SK-N-SH (cell line): ENCODE measurements at regions of chr7 and their contacts with region 1.

Region 1: DNA sequence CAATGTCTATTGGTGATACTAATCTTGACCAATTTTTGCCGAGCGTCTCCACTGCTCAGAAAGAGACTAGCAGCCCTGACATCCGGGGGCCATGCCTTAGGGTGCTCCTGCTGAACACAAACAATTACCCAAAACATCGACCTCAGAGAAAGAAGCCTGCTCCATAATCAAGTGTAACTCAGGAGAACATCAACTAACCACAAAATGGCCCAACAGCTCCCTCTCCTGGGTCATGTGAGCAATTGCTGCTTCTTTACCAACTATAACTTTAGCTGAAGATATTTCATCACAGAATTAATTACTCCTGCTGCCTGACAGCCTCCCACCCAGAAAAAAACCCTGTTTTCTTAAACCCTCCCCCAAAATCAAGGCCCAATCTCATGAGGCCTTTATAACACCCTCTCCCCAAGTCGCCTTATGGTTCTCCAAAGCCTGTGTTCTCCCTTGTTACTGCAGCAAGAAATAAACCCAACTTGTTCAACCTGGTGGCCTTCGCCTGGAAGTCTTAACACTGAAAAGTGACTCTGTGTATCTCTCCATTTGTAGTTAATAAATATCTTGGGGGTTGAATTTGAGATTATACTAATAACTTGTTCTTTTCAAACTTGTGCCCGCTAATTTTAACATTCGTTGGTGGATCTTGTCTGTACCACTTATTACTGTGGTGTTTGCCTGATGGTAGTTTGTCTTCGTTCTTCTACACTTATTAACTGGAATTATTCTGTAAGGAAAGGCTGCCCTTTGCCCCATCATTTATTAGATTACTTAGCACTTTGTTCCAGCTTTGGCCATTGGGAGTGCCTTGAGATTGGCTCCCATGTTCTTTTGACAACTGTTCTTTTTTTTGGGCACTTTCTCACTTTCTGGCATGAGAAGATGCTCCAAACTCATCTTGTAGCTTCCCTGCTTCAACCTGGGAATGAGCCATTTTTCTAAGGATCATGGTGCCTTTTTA is 21.2 kb upstream of the RAMP3 start:
- DNase-seq: peak; percentile 86
- H3K4me3 ChIP-seq: no peak overlapping the region; a peak in 1 of 4 replicates
- H3K27ac ChIP-seq: no peak overlapping the region
- H3K4me1 ChIP-seq: no peaks in the 10 kb centered on the region
- H3K27me3 ChIP-seq: peaks cover 9% of the 10 kb centered on the region; the same call in 1 of the 2 replicates
- CTCF ChIP-seq: peak; percentile 99
- EP300 ChIP-seq: no peak
- RAD21 ChIP-seq: peak; percentile 100

Region 2: GRCh38 chr7:44858161-44858560 is 278.2 kb before region 1 on chr7:
- CTCF ChIA-PET with region 1: interaction called, 60 read pairs
- POLR2A ChIA-PET with region 1: interaction called, 6 read pairs
- DNase-seq: no peak
- H3K4me3 ChIP-seq: no peak overlapping the region
- H3K27ac ChIP-seq: no peak overlapping the region
- H3K4me1 ChIP-seq: no peaks in the 10 kb centered on the region
- H3K27me3 ChIP-seq: no peaks in the 10 kb centered on the region
- CTCF ChIP-seq: peak; percentile 53
- EP300 ChIP-seq: no peak
- RAD21 ChIP-seq: no peak

Region 3: GRCh38 chr7:44921607-44922359 is 214.6 kb before region 1 on chr7:
- CTCF ChIA-PET with region 1: interaction called, 19 read pairs
- POLR2A ChIA-PET with region 1: no interaction called
- DNase-seq: peak; percentile 90
- H3K4me3 ChIP-seq: no peak overlapping the region; a peak in 1 of 4 replicates
- H3K27ac ChIP-seq: no peak overlapping the region
- H3K4me1 ChIP-seq: no peaks in the 10 kb centered on the region
- H3K27me3 ChIP-seq: 0 out of 2 replicates have a peak, but pooled peaks cover 3% of the 10 kb centered on the region
- CTCF ChIP-seq: peak; percentile 95
- EP300 ChIP-seq: no peak
- RAD21 ChIP-seq: peak; percentile 87

Region 4: GRCh38 chr7:44964384-44964825 is 172.0 kb before region 1 on chr7:
- CTCF ChIA-PET with region 1: interaction called, 125 read pairs
- POLR2A ChIA-PET with region 1: no interaction called
- DNase-seq: peak; percentile 71
- H3K4me3 ChIP-seq: no peak overlapping the region
- H3K27ac ChIP-seq: no peak overlapping the region
- H3K4me1 ChIP-seq: no peaks in the 10 kb centered on the region
- H3K27me3 ChIP-seq: no peaks in the 10 kb centered on the region
- CTCF ChIP-seq: peak; percentile 57
- EP300 ChIP-seq: no peak
- RAD21 ChIP-seq: peak; percentile 58

Region 5: DNA sequence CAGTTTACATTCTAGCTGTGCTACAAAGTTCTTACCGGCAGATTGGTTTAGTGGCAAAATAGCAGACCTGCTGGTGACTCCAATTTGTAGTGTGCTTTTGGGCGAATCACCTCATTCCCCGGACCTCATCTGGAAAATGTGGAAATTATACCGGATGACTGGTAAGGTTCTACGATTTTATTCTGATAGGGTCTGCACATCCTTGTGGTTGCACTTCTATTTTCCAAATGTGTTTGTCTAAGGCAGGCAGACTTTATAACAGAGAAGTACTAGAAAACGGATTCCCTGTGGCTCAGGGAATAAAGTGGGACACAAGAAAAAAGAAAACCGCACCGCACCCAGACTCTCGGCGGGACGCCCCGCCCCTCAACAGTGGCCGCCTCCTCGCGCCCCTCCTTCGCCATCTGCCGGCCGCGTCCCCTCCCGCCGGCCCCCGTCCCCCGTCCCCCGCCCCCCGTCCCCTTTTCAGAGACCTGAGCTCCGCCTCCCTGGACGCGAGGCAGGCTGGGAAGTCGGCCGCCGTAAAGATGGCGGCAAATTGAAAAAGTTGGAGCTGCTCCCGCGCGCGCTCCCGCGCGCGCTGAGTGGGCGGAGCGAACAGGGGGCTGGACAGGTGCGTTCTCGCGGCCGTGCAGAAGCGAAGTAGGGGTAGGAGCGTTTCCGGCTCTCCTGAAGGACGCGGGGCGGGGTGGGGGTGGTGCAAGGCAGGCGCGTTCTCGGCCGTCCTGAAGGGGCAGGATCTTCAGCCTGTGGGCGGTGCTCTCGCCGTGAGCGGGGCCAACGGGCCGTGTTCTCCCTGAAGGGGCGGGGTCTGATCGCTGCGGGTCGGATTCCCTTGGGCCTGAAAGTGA is 136.9 kb before region 1 on chr7:
- CTCF ChIA-PET with region 1: interaction called, 12 read pairs
- POLR2A ChIA-PET with region 1: no interaction called
- DNase-seq: peak; percentile 99
- H3K4me3 ChIP-seq: peak overlapping the region; percentile 48 to 77
- H3K27ac ChIP-seq: peak overlapping the region; percentile 80 to 86
- H3K4me1 ChIP-seq: peaks cover 0 to 10% of the 10 kb centered on the region in 2 experiments; a peak in 3 of 4 replicates
- H3K27me3 ChIP-seq: no peaks in the 10 kb centered on the region
- CTCF ChIP-seq: no peak
- EP300 ChIP-seq: 0 out of 4 replicates have a peak, but pooled peaks of 1 of the 2 experiments have one; percentile 11
- RAD21 ChIP-seq: no peak

Region 6: GRCh38 chr7:45111298-45112223 is 24.8 kb before region 1 on chr7 and contains the start of gene TBRG4:
- CTCF ChIA-PET with region 1: interaction called, 149 read pairs
- POLR2A ChIA-PET with region 1: interaction called, 8 read pairs
- DNase-seq: peak; percentile 96
- H3K4me3 ChIP-seq: peak within 1 kb of the TSS; percentile 69 to 97
- H3K27ac ChIP-seq: peak within 1 kb of the TSS; percentile 96 to 98
- H3K4me1 ChIP-seq: peaks cover 12 to 25% of the 10 kb centered on the region in 2 experiments; a peak in 2 of 4 replicates
- H3K27me3 ChIP-seq: peaks cover 11% of the 10 kb centered on the region; the same call in 1 of the 2 replicates
- CTCF ChIP-seq: peak; percentile 63
- EP300 ChIP-seq: no peak; a peak in 1 of 4 replicates
- RAD21 ChIP-seq: peak; percentile 63
- polyA plus RNA-seq, gene TBRG4: 76.2 and 89.4 TPM in 2 replicates

Region 7: DNA sequence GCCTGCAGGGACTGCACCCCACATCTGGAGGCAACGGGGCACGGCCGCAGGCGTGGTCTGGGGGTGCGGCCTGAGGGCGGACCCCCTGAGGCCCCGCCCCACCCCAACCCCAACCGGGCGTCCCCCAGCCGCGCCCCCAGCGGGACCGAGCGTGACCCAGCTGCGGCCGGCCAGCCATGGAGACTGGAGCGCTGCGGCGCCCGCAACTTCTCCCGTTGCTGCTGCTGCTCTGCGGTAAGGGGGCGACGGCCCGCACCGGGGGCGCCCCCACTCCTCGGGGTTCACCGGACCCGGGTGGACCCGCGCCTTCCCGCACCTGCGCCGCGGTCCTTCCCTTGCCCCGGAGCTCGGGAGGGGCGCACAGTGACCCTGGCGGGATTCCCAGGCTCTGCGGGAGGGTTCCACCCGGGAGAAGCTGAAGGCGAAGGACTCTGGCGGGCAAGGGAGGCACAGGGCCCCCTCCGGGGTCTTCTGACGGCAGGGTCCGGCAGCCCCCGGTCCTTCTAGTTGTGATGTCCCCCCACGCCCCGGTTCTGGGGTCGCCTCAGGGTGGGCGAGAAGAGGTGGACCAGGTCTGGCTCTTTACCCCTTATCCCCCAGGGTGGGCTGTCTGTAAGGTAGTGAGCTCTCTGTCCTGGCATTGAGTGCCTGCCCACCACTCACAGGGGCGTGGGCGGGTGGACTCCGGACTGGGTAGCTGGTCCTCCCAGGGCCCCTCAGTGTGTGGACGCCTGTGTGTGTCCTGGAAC is 21.4 kb after region 1 on chr7 and contains the start of gene RAMP3:
- CTCF ChIA-PET with region 1: interaction called, 10 read pairs
- POLR2A ChIA-PET with region 1: no interaction called
- DNase-seq: peak; percentile 88
- H3K4me3 ChIP-seq: peak within 1 kb of the TSS in 1 of 2 experiments; percentile 35; a peak in 1 of 4 replicates
- H3K27ac ChIP-seq: no peak within 1 kb of the TSS
- H3K4me1 ChIP-seq: peaks cover 0 to 14% of the 10 kb centered on the region in 2 experiments; a peak in 1 of 4 replicates
- H3K27me3 ChIP-seq: peaks cover 29% of the 10 kb centered on the region
- CTCF ChIP-seq: no peak
- EP300 ChIP-seq: no peak
- RAD21 ChIP-seq: no peak
- polyA plus RNA-seq, gene RAMP3: not detected in 2 replicates